Common myeloid progenitor, CD34-positive (primary cell): ENCODE measurements at regions of chr6 and their contacts with region 1.

Region 1: GRCh38 chr6:32984605-32985389 is 16.4 kb downstream of the BRD2 start:
- DNase-seq: peak; percentile 90 to 95 (median 93)
- H3K4me3 ChIP-seq: no peak overlapping the region
- H3K27ac ChIP-seq: no peak overlapping the region
- H3K4me1 ChIP-seq: peaks cover 0 to 10% (median 3%) of the 10 kb centered on the region in 4 experiments
- H3K27me3 ChIP-seq: no peaks in the 10 kb centered on the region

Region 2: GRCh38 chr6:32838114-32838958 is 146.5 kb before region 1 on chr6 and contains the start of gene TAP2:
- CTCF ChIA-PET with region 1: interaction called, 11 read pairs
- POLR2A ChIA-PET with region 1: no interaction called
- DNase-seq: peak; percentile 93 to 97 (median 96)
- H3K4me3 ChIP-seq: peak within 1 kb of the TSS; percentile 47 to 92 (median 76)
- H3K27ac ChIP-seq: peak within 1 kb of the TSS in 1 of 2 experiments; percentile 79
- H3K4me1 ChIP-seq: peaks cover 15 to 46% (median 32%) of the 10 kb centered on the region in 4 experiments
- H3K27me3 ChIP-seq: no peaks in the 10 kb centered on the region

Region 3: GRCh38 chr6:32885698-32886286 is 99.0 kb before region 1 on chr6:
- CTCF ChIA-PET with region 1: interaction called, 97 read pairs
- POLR2A ChIA-PET with region 1: no interaction called
- DNase-seq: peak; percentile 80 to 92 (median 86)
- H3K4me3 ChIP-seq: no peak overlapping the region
- H3K27ac ChIP-seq: no peak overlapping the region
- H3K4me1 ChIP-seq: peaks cover 0 to 2% (median 0%) of the 10 kb centered on the region in 4 experiments
- H3K27me3 ChIP-seq: peaks cover 0 to 3% (median 0%) of the 10 kb centered on the region in 5 experiments

Region 4: GRCh38 chr6:32912951-32913350 is 71.8 kb before region 1 on chr6:
- CTCF ChIA-PET with region 1: interaction called, 12 read pairs
- POLR2A ChIA-PET with region 1: no interaction called
- DNase-seq: no peak
- H3K4me3 ChIP-seq: no peak overlapping the region
- H3K27ac ChIP-seq: no peak overlapping the region
- H3K4me1 ChIP-seq: peaks cover 0 to 7% (median 0%) of the 10 kb centered on the region in 4 experiments
- H3K27me3 ChIP-seq: no peaks in the 10 kb centered on the region

Region 5: DNA sequence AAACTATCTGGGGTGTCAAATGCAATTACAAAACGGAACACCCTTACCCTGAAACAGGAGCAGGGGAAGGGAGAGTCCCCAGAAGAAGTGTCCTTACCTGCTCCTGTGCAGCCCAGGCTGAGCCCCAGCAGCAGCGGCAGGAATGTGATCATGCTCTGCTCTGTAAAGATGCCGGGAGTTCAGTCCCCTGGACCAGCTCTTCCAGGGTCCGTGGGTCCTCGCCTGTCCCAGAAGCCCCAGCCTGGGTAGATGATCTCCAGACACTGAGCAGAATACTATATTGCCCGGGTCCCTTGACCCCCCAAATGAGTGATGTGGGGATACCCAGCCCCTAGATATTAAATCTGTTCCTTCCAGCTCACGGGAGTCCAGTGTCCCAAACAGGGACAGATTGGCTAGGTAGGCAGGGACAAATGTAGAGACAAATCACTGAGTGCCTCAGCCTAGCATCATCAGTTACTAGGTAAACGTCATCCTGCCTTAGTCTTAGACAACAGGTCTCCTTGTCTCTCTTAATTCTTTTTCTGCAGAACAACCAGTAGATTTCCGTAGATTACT is 44.1 kb before region 1 on chr6 and contains the start of gene HLA-DMB:
- CTCF ChIA-PET with region 1: interaction called, 139 read pairs
- POLR2A ChIA-PET with region 1: no interaction called
- DNase-seq: peak; percentile 85 to 88 (median 87)
- H3K4me3 ChIP-seq: peak within 1 kb of the TSS; percentile 70 to 97 (median 89)
- H3K27ac ChIP-seq: peak within 1 kb of the TSS; percentile 72 to 83
- H3K4me1 ChIP-seq: peaks cover 36 to 78% (median 59%) of the 10 kb centered on the region in 4 experiments
- H3K27me3 ChIP-seq: no peaks in the 10 kb centered on the region

Region 6: GRCh38 chr6:32952817-32953739 is 31.7 kb before region 1 on chr6 and contains the start of gene HLA-DMA:
- CTCF ChIA-PET with region 1: interaction called, 346 read pairs
- POLR2A ChIA-PET with region 1: interaction called, 5 read pairs
- DNase-seq: peak; percentile 99 to 100 (median 99)
- H3K4me3 ChIP-seq: peak within 1 kb of the TSS; percentile 47 to 99 (median 80)
- H3K27ac ChIP-seq: peak within 1 kb of the TSS; percentile 78 to 91
- H3K4me1 ChIP-seq: peaks cover 13 to 55% (median 50%) of the 10 kb centered on the region in 4 experiments
- H3K27me3 ChIP-seq: no peaks in the 10 kb centered on the region

Region 7: GRCh38 chr6:33000055-33000454 is 15.3 kb after region 1 on chr6:
- CTCF ChIA-PET with region 1: interaction called, 33 read pairs
- POLR2A ChIA-PET with region 1: no interaction called
- DNase-seq: peak; percentile 68 to 86 (median 77)
- H3K4me3 ChIP-seq: no peak overlapping the region
- H3K27ac ChIP-seq: no peak overlapping the region
- H3K4me1 ChIP-seq: peaks cover 5 to 8% (median 6%) of the 10 kb centered on the region in 4 experiments
- H3K27me3 ChIP-seq: peaks cover 0 to 3% (median 0%) of the 10 kb centered on the region in 5 experiments

Region 8: DNA sequence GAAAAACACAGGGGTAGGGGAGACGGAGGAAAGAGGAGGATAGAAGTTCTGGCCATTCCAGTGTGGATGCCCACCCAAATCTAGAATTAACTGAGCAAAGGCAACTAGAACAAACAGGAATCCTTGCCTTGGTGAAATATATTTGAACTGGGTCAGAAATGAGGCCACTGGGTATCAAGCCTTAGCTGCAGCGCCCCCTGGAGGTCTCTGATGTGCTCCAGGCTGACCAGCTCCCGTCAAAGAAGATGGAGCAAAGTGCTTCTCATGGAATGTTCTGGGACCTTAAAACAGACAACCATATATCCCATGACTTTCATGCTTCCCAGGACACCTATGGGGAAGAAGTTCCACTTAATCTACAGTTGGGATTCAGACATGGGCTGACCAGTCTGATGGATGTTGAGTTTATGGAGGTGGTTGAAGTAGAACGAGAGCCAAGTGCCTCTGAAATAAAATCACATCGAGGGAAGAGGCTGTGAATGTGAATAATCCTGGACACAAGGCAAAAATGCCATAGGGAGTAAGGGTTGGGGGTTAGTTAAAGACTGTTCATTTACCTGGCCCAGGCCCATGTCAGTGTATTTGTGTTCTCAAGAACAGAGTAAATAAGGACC is 141.4 kb after region 1 on chr6:
- CTCF ChIA-PET with region 1: no interaction called
- POLR2A ChIA-PET with region 1: no interaction called
- DNase-seq: peak; percentile 51 to 78 (median 66)
- H3K4me3 ChIP-seq: no peak overlapping the region
- H3K27ac ChIP-seq: no peak overlapping the region
- H3K4me1 ChIP-seq: no peaks in the 10 kb centered on the region
- H3K27me3 ChIP-seq: no peaks in the 10 kb centered on the region